ENCODE measurements at regions of chr7 and their contacts with region 1.

Region 1: DNA sequence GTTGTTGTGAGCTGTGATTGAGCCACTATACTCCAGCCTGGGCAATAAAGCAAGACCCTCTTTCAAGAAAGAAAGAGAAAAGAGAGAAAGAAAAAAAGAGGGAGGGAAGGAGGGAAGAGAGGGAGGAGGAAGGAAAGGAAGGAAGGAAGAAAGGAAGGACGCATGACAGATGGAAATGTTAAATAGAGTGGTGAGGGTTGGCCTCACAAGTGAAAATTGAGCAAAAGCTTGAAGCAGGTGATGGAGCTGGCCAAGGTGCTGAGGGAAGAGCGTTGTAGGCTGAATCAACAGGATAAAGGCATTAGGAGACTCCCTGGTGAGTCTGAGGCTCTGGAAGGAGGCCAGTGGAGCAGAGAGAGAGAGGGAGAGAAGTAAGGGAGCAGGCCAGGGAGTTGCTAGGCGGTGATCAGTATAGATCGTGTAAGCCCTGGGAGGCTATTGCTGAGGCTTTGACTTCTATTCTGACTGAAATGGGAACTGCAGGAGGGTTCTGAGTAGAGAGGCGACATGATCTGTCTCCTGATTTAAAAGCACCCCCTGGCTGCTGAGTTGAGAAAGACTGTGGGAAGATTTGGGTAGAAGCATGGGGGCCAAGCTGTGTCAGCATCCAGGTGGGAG is 26.5 kb upstream of the TMEM248 start:
- H3K4me3 Mint-ChIP-seq: no peak overlapping the region
- H3K27ac Mint-ChIP-seq: no peak overlapping the region
- H3K4me1 Mint-ChIP-seq: peaks cover 15% of the 10 kb centered on the region
- H3K27me3 Mint-ChIP-seq: no peaks in the 10 kb centered on the region

Region 2: GRCh38 chr7:66800591-66800990 is 94.0 kb before region 1 on chr7:
- intact Hi-C with region 1: no loop called
- H3K4me3 Mint-ChIP-seq: no peak overlapping the region
- H3K27ac Mint-ChIP-seq: no peak overlapping the region
- H3K4me1 Mint-ChIP-seq: no peaks in the 10 kb centered on the region
- H3K27me3 Mint-ChIP-seq: no peaks in the 10 kb centered on the region

Region 3: GRCh38 chr7:66837007-66837406 is 57.6 kb before region 1 on chr7:
- intact Hi-C with region 1: loop called (anchors 1 kb)
- H3K4me3 Mint-ChIP-seq: no peak overlapping the region
- H3K27ac Mint-ChIP-seq: peak overlapping the region; percentile 66
- H3K4me1 Mint-ChIP-seq: peaks cover 7% of the 10 kb centered on the region
- H3K27me3 Mint-ChIP-seq: no peaks in the 10 kb centered on the region

Measured in dendritic cell treated with granulocyte-macrophage colony-stimulating factor and Interleukin-4, amounts not matched to agents 40 ng/mL and 50 ng/mL, for 4 days (primary cell).